Panc1 (cell line): ENCODE measurements at regions of chr17 and their contacts with region 1.

Region 1: GRCh38 chr17:78112518-78113226 is 15.9 kb downstream of the TMC6 start:
- DNase-seq: no peak
- ATAC-seq: peak; percentile 90
- H3K4me3 ChIP-seq: no peak overlapping the region
- H3K27ac ChIP-seq: no peak overlapping the region
- H3K4me1 ChIP-seq: no peaks in the 10 kb centered on the region; the same call in 1 of the 2 replicates
- H3K27me3 ChIP-seq: no peaks in the 10 kb centered on the region
- CTCF ChIP-seq: peak; percentile 99

Region 2: DNA sequence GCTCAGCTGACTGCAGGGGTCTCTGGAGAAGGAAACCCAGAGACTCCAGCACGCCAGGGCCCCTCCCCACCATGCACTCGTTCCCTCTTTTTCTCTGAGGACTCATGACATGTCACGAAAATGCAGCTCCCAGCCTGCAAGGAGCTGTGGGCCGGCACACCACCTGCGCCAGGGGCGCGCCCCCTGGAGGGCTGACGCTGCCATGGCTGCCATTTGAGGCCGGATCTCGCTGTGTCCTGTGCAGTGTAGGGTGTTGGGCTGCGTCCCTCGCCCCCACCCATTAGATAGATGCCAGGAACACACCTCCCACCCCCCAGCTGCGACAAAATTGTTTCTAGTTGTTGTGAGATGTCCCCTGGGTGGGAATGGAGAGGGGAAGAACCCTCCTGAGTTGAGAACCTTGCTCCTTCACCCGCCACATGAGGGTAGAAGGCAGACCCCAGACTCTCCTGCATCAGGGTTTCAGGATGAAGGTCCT is 63.9 kb after region 1 on chr17:
- CTCF ChIA-PET with region 1: interaction called, 4 read pairs
- POLR2A ChIA-PET with region 1: no interaction called
- in situ Hi-C with region 1: no loop called
- intact Hi-C with region 1: loop called (anchors 5 kb)
- DNase-seq: no peak
- ATAC-seq: peak; percentile 67
- H3K4me3 ChIP-seq: no peak overlapping the region
- H3K27ac ChIP-seq: peak overlapping the region; percentile 24; the same call in 1 of the 2 replicates
- H3K4me1 ChIP-seq: peaks cover 47% of the 10 kb centered on the region
- H3K27me3 ChIP-seq: no peaks in the 10 kb centered on the region
- CTCF ChIP-seq: peak; percentile 99

Region 3: DNA sequence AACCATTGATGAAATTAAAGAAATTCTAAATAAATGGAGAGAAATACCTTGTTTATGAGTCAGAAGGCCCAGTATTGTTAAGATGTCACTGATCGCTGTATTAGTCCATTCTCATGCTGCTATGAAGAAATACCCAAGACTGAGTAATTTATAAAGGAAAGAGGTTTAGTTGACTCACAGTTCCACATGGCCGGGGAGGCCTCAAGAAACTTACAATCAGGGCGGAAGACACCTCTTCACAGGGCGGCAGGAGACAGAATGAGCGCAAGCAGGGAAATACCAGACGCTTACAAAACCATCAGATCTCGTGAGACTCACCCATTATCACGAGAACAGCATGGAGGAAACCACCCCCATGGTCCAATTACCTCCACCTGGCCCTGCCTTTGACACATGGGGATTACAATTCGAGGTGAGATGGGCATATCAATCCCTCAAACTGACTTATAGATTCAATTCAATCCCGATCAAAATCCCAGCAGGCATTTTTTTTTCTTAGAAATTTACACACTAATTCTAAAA is 1119.2 kb after region 1 on chr17:
- CTCF ChIA-PET with region 1: no interaction called
- POLR2A ChIA-PET with region 1: interaction called, 11 read pairs
- in situ Hi-C with region 1: no loop called
- intact Hi-C with region 1: no loop called
- DNase-seq: no peak
- ATAC-seq: no peak
- H3K4me3 ChIP-seq: no peak overlapping the region
- H3K27ac ChIP-seq: no peak overlapping the region
- H3K4me1 ChIP-seq: no peaks in the 10 kb centered on the region
- H3K27me3 ChIP-seq: peaks cover 4% of the 10 kb centered on the region; the same call in 1 of the 2 replicates
- CTCF ChIP-seq: no peak